SK-N-SH (cell line): ENCODE measurements at regions of chr14 and their contacts with region 1.

Region 1: DNA sequence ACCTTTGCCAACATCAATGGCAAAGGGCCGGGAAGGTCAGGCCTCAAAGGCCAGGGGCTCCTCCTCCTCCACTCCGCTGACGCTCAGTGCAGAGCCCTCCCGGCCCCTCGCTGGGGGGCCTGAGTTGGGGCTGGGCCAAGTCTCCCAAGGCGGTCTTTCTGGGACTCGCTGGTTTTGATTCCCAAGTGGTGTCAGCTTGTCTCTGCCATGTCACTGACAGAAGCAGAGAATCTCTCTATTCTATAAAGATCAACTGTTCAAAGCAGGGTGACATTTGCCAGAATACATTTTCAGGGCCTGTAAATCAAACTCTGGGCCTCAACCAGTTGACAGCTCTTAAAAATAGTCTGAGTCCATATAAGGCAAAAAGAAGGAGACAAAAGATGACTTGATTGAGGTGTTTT is 75.9 kb downstream of the CCDC88C start:
- DNase-seq: no peak
- H3K4me3 ChIP-seq: no peak overlapping the region
- H3K27ac ChIP-seq: no peak overlapping the region
- H3K4me1 ChIP-seq: peaks cover 0 to 6% of the 10 kb centered on the region in 2 experiments; a peak in 1 of 4 replicates
- H3K27me3 ChIP-seq: no peaks in the 10 kb centered on the region
- CTCF ChIP-seq: no peak
- EP300 ChIP-seq: no peak
- RAD21 ChIP-seq: no peak

Region 2: GRCh38 chr14:91418387-91419043 is 76.8 kb after region 1 on chr14:
- CTCF ChIA-PET with region 1: interaction called, 20 read pairs
- POLR2A ChIA-PET with region 1: no interaction called
- DNase-seq: peak; percentile 78
- H3K4me3 ChIP-seq: peak overlapping the region; percentile 52 to 58
- H3K27ac ChIP-seq: no peak overlapping the region
- H3K4me1 ChIP-seq: peaks cover 0 to 22% of the 10 kb centered on the region in 2 experiments; a peak in 2 of 4 replicates
- H3K27me3 ChIP-seq: peaks cover 15% of the 10 kb centered on the region
- CTCF ChIP-seq: peak; percentile 98
- EP300 ChIP-seq: no peak
- RAD21 ChIP-seq: peak; percentile 91